GM12878 (cell line): ENCODE measurements at regions of chr6 and their contacts with region 1.

Region 1: DNA sequence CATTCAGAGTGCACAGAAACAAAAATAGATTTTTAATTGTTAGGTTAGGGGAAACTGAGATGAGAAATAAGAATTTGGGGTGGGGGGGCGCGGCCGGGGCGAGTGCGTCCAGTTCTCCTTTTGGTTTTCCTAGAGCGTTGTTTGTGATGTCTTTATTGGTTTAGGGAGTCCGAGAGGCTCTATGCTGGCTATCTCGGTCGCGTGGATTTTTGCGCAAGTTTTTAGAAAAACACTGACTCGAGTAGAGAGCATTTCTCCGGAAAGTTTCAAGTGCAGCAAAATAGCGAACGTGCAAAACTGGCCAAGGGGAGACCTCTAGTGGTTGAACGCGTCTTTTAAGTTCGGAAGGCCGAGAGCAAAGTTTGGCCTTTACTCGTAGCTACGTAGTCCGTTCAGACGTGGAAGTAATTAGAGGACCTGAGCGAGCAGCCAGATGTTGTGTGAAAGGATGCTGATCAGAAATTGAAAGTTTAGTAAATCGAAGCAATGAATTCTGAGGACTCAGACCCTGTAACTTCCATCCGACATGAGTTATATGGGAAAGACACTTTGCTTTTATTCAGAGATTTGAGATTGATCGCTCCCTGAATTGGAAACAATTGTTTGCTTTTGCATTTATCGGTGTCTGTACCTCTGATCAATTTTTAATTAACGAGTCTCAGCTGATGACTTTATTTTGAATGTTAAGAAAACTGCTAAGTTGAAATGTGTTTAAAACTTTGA is 2.7 kb downstream of the L3MBTL3 start:
- DNase-seq: peak; percentile 72
- ATAC-seq: peak; percentile 82
- H3K4me3 ChIP-seq: peak overlapping the region; percentile 82
- H3K27ac ChIP-seq: no peak overlapping the region
- H3K4me1 ChIP-seq: no peaks in the 10 kb centered on the region
- H3K27me3 ChIP-seq: no peaks in the 10 kb centered on the region
- CTCF ChIP-seq: peak; percentile 80 to 94 (median 81); a peak in 5 of 6 replicates
- EP300 ChIP-seq: no peak
- POLR2A ChIP-seq: no peak
- RAD21 ChIP-seq: peak; percentile 94

Region 2: GRCh38 chr6:129264480-129265045 is 756.5 kb before region 1 on chr6:
- CTCF ChIA-PET with region 1: no interaction called
- POLR2A ChIA-PET with region 1: no interaction called
- RAD21 ChIA-PET with region 1: no interaction called
- SMC1A ChIA-PET with region 1: no interaction called
- in situ Hi-C with region 1: no loop called
- intact Hi-C with region 1: no loop called
- DNase-seq: no peak
- ATAC-seq: no peak
- H3K4me3 ChIP-seq: no peak overlapping the region
- H3K27ac ChIP-seq: no peak overlapping the region
- H3K4me1 ChIP-seq: no peaks in the 10 kb centered on the region
- H3K27me3 ChIP-seq: no peaks in the 10 kb centered on the region
- CTCF ChIP-seq: no peak
- EP300 ChIP-seq: no peak
- POLR2A ChIP-seq: no peak
- RAD21 ChIP-seq: no peak

Region 3: GRCh38 chr6:129555206-129555832 is 465.7 kb before region 1 on chr6:
- CTCF ChIA-PET with region 1: no interaction called
- POLR2A ChIA-PET with region 1: no interaction called
- RAD21 ChIA-PET with region 1: no interaction called
- SMC1A ChIA-PET with region 1: no interaction called
- in situ Hi-C with region 1: no loop called
- intact Hi-C with region 1: no loop called
- DNase-seq: no peak
- ATAC-seq: no peak
- H3K4me3 ChIP-seq: no peak overlapping the region
- H3K27ac ChIP-seq: no peak overlapping the region
- H3K4me1 ChIP-seq: no peaks in the 10 kb centered on the region
- H3K27me3 ChIP-seq: no peaks in the 10 kb centered on the region
- CTCF ChIP-seq: no peak
- EP300 ChIP-seq: no peak
- POLR2A ChIP-seq: no peak
- RAD21 ChIP-seq: no peak

Region 4: GRCh38 chr6:129583866-129584265 is 437.2 kb before region 1 on chr6:
- CTCF ChIA-PET with region 1: no interaction called
- POLR2A ChIA-PET with region 1: no interaction called
- RAD21 ChIA-PET with region 1: no interaction called
- SMC1A ChIA-PET with region 1: no interaction called
- in situ Hi-C with region 1: no loop called
- intact Hi-C with region 1: no loop called
- DNase-seq: no peak
- ATAC-seq: no peak
- H3K4me3 ChIP-seq: no peak overlapping the region
- H3K27ac ChIP-seq: no peak overlapping the region
- H3K4me1 ChIP-seq: no peaks in the 10 kb centered on the region
- H3K27me3 ChIP-seq: no peaks in the 10 kb centered on the region
- CTCF ChIP-seq: no peak
- EP300 ChIP-seq: no peak
- POLR2A ChIP-seq: no peak
- RAD21 ChIP-seq: no peak

Region 5: DNA sequence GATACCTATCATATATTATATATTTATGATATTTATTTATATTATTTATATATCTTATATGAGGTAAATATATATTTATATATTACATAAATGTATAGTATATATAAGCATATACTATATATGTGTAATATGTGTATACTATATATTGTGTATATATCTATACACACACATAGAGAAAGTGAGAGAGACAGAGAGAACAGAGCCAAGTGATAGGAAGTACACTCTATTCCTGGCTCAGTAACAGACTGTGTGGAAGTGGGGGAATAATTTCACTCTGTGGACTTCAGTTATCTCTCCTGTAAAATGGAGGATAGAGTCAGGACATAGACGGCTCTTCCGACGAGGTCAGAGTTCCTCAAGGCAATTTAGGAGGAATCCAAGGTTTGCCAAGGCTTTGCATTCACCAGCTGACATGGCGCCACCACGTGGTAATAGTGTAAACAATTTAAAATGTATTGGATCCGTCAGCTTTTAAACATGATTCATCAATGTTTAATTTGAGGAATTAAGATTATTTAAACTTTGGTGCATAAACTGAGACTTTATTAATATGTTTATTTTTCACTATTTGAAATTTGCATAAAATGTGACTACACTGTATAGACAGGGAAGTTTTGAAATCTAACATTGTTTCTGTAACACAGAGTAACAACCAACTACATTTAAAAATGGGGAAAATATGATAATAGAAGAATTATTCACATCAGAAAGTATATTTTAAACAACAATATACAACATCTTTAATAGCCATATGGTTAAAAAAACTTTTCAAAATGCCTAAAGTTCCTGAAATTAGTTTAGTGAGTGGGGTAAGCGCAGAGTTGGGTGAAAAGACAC is 84.5 kb before region 1 on chr6:
- CTCF ChIA-PET with region 1: interaction called, 14 read pairs
- POLR2A ChIA-PET with region 1: no interaction called
- RAD21 ChIA-PET with region 1: interaction called, 10 read pairs
- SMC1A ChIA-PET with region 1: interaction called, 15 read pairs
- in situ Hi-C with region 1: no loop called
- intact Hi-C with region 1: loop called (anchors 2 kb)
- DNase-seq: peak; percentile 21
- ATAC-seq: peak; percentile 84
- H3K4me3 ChIP-seq: no peak overlapping the region
- H3K27ac ChIP-seq: no peak overlapping the region
- H3K4me1 ChIP-seq: no peaks in the 10 kb centered on the region
- H3K27me3 ChIP-seq: no peaks in the 10 kb centered on the region; a peak in 1 of 4 replicates
- CTCF ChIP-seq: peak; percentile 64 to 77 (median 66)
- EP300 ChIP-seq: no peak
- POLR2A ChIP-seq: no peak
- RAD21 ChIP-seq: peak; percentile 81

Region 6: DNA sequence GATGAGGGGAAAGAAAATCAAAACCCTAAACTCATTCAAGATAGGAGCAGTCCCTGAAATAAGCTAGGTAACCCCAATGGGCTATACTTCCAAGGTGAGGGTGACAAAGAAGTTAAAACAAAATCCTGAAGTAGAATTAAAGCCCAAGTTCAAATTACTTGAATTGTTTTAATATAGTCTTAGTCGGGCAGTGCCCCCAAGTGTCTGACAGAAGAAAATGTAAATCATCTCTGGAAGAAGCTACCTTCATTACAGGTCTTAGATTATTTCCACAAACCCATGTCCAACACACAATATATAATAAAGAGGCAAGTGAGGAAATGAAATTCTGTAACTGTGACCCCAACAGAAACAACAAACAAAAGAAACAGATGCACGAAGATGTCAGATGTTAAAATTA is 39.5 kb before region 1 on chr6:
- CTCF ChIA-PET with region 1: interaction called, 8 read pairs
- POLR2A ChIA-PET with region 1: no interaction called
- RAD21 ChIA-PET with region 1: interaction called, 10 read pairs
- SMC1A ChIA-PET with region 1: interaction called, 7 read pairs
- in situ Hi-C with region 1: no loop called
- intact Hi-C with region 1: no loop called
- DNase-seq: no peak
- ATAC-seq: peak; percentile 49; the same call in 2 of the 3 replicates
- H3K4me3 ChIP-seq: no peak overlapping the region
- H3K27ac ChIP-seq: no peak overlapping the region
- H3K4me1 ChIP-seq: no peaks in the 10 kb centered on the region
- H3K27me3 ChIP-seq: no peaks in the 10 kb centered on the region; a peak in 1 of 4 replicates
- CTCF ChIP-seq: peak in 1 of 3 experiments; percentile 33; a peak in 1 of 6 replicates
- EP300 ChIP-seq: no peak
- POLR2A ChIP-seq: no peak
- RAD21 ChIP-seq: peak; percentile 30; the same call in 1 of the 2 replicates

Region 7: GRCh38 chr6:130394246-130394645 is 373.2 kb after region 1 on chr6:
- CTCF ChIA-PET with region 1: no interaction called
- POLR2A ChIA-PET with region 1: no interaction called
- RAD21 ChIA-PET with region 1: no interaction called
- SMC1A ChIA-PET with region 1: no interaction called
- in situ Hi-C with region 1: no loop called
- intact Hi-C with region 1: no loop called
- DNase-seq: no peak
- ATAC-seq: no peak
- H3K4me3 ChIP-seq: no peak overlapping the region
- H3K27ac ChIP-seq: no peak overlapping the region
- H3K4me1 ChIP-seq: no peaks in the 10 kb centered on the region
- H3K27me3 ChIP-seq: no peaks in the 10 kb centered on the region
- CTCF ChIP-seq: no peak
- EP300 ChIP-seq: no peak
- POLR2A ChIP-seq: no peak
- RAD21 ChIP-seq: no peak